GM18951 (cell line): ENCODE measurements at regions of chrX and their contacts with region 1.

Region 1: DNA sequence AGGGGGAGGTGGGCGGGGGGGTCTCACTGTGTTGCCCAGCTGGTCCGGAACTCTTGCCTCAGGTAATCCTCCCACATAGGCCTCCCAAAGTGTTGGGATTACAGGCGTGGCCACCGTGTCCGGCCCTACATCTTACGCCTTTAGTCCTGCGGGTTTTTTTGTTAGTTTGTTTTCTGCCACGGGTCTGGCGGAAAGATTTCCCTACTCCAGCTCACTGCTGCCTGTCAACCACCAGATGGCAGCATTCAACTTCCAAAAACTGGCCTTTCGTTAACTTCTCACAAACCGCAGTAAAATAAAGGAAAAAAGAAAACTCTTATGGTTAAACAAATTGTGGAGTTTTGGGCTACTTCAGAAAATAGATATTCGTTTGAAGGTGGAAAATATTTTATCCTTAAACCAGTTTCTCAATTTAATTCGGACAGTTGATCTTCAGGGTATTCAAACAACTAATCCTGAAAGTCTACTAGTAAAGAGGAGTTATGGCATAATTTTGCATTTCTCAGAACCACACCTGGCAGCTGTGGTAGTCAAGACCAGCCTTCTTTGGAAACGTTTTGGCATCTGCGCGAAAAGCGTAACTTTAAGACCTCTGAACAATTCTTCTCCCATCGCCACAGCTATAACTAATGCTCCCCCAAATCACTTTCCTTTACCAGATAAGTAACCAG is 41.1 kb downstream of the LUZP4 start:
- POLR2A ChIP-seq: no peak

Region 2: DNA sequence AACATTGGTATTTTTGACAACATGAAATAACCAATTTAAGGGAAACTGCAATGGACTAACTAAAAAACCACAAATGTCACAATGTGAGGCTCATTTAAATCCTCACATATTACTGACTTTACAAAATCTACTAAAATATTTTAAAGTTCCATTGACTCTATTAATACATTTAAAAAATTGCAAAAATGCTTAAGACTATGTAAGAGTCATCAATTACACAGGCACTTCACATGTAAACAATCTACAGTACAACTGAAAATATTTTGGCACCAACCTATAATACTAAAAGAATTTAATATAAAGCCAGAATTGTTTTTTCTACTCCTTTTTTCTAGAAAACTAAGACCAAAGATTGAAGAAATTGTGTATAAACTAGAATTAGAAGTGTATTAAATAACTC is 218.2 kb before region 1 on chrX:
- in situ Hi-C with region 1: no loop called
- POLR2A ChIP-seq: no peak

Region 3: DNA sequence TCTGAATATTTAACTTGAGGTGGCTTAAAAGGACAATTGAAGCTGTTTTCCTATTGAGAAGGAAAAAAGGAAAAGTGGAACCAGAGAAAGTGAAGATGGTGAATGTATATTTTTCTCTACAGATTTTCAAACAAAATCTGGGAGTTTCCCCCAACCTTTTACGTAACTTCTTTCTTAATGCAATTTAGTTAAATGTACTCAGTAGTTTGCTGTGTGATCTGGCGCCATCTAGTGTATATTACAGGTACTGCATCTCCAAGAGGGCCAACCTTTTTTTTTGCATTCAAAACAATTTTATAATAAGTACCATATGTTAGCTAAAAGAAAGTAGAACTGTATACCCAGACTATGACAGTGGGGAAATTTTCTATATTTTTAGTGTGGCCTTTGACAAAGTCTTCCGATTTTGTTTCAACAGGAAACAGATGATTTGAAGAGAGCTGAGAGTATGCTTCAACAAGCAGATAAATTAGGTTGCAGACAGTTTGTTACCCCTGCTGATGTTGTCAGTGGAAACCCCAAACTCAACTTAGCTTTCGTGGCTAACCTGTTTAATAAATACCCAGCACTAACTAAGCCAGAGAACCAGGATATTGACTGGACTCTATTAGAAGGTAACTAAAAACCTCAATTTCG is 312.4 kb after region 1 on chrX:
- in situ Hi-C with region 1: loop called (anchors 10 kb)
- POLR2A ChIP-seq: no peak

Region 4: DNA sequence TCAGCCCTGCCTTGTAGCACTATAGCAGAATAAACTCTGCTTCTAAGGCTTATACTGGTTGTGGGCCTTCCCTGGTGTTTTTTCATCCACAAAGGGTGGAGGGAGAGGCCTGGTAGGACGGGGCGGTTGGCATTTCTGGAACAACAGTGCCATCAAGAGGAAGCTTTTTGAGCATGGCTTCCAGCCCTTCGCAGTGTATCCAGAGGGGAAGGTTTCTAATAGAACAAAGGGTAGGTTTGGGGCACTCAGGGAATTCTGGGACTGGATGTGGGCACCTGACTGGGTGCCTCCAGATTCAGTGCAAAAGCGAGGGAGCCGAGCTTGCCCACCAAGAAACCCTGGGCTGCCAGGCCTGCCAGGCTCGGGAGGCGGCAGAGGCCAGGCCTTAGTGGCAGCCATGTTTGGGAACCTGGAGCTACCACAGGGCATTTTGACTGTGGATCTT is 610.3 kb after region 1 on chrX:
- in situ Hi-C with region 1: loop called (anchors 10 kb)
- POLR2A ChIP-seq: no peak

Region 5: GRCh38 chrX:115972717-115973116 is 642.1 kb after region 1 on chrX:
- in situ Hi-C with region 1: no loop called
- POLR2A ChIP-seq: no peak

Region 6: GRCh38 chrX:116142976-116143375 is 812.3 kb after region 1 on chrX:
- in situ Hi-C with region 1: no loop called
- POLR2A ChIP-seq: no peak